CD14-positive monocyte (primary cell): ENCODE measurements at regions of chr13 and their contacts with region 1.

Region 1: GRCh38 chr13:30607908-30608307 is 9.8 kb upstream of the USPL1 start:
- DNase-seq: peak in 2 of 3 donors; percentile 11 to 28
- H3K4me3 ChIP-seq: no peak overlapping the region
- H3K4me3 Mint-ChIP-seq: no peak overlapping the region
- H3K27ac ChIP-seq: no peak overlapping the region
- H3K27ac Mint-ChIP-seq: no peak overlapping the region
- H3K4me1 ChIP-seq: no peaks in the 10 kb centered on the region
- H3K4me1 Mint-ChIP-seq: peaks cover 10% of the 10 kb centered on the region
- H3K27me3 ChIP-seq: no peaks in the 10 kb centered on the region
- H3K27me3 Mint-ChIP-seq: peaks cover 0 to 12% (median 5%) of the 10 kb centered on the region in 3 donors
- CTCF ChIP-seq: no peak

Region 2: DNA sequence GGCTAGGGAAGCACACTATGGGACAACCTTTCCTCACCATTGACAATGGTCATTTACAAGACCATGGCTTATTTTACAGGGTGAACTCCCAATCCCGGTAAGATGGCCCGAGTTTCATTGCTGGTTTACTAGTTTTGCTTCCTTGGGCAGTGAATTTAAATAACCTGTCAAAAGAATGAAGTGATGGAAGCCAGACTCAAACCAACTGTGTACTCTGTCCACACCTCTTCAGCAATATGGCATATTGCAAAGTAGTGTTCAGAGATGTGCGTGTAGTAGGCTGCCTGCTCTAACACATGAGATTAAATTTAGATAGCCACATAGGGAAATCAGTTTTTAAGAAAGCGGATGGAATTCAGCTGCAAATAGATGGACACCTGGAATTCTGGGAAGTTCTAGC is 48.6 kb before region 1 on chr13:
- intact Hi-C with region 1: loop called in 1 of 2 experiments (anchors 5 kb)
- DNase-seq: no peak
- H3K4me3 ChIP-seq: no peak overlapping the region
- H3K4me3 Mint-ChIP-seq: no peak overlapping the region
- H3K27ac ChIP-seq: no peak overlapping the region
- H3K27ac Mint-ChIP-seq: no peak overlapping the region
- H3K4me1 ChIP-seq: no peaks in the 10 kb centered on the region
- H3K4me1 Mint-ChIP-seq: no peaks in the 10 kb centered on the region
- H3K27me3 ChIP-seq: no peaks in the 10 kb centered on the region
- H3K27me3 Mint-ChIP-seq: peaks cover 0 to 2% (median 0%) of the 10 kb centered on the region in 3 donors
- CTCF ChIP-seq: no peak